PC-3 (cell line): ENCODE measurements at regions of chr7 and their contacts with region 1.

Region 1: GRCh38 chr7:45136106-45137060 is 21.2 kb upstream of the RAMP3 start:
- DNase-seq: peak; percentile 78
- ATAC-seq: peak; percentile 88
- H3K4me3 ChIP-seq: no peak overlapping the region
- H3K27ac ChIP-seq: no peak overlapping the region
- H3K4me1 ChIP-seq: no peaks in the 10 kb centered on the region; the same call in 1 of the 2 replicates
- H3K27me3 ChIP-seq: no peaks in the 10 kb centered on the region
- CTCF ChIP-seq: peak; percentile 90

Region 2: GRCh38 chr7:44858161-44858560 is 278.2 kb before region 1 on chr7:
- CTCF ChIA-PET with region 1: interaction called, 14 read pairs
- POLR2A ChIA-PET with region 1: interaction called, 7 read pairs
- intact Hi-C with region 1: loop called (anchors 1 kb)
- DNase-seq: no peak
- ATAC-seq: no peak
- H3K4me3 ChIP-seq: no peak overlapping the region
- H3K27ac ChIP-seq: no peak overlapping the region
- H3K4me1 ChIP-seq: no peaks in the 10 kb centered on the region
- H3K27me3 ChIP-seq: no peaks in the 10 kb centered on the region
- CTCF ChIP-seq: no peak

Region 3: GRCh38 chr7:44944821-44945220 is 191.6 kb before region 1 on chr7:
- CTCF ChIA-PET with region 1: interaction called, 11 read pairs
- POLR2A ChIA-PET with region 1: no interaction called
- intact Hi-C with region 1: no loop called
- DNase-seq: no peak
- ATAC-seq: no peak
- H3K4me3 ChIP-seq: no peak overlapping the region
- H3K27ac ChIP-seq: no peak overlapping the region
- H3K4me1 ChIP-seq: no peaks in the 10 kb centered on the region
- H3K27me3 ChIP-seq: no peaks in the 10 kb centered on the region
- CTCF ChIP-seq: no peak

Region 4: DNA sequence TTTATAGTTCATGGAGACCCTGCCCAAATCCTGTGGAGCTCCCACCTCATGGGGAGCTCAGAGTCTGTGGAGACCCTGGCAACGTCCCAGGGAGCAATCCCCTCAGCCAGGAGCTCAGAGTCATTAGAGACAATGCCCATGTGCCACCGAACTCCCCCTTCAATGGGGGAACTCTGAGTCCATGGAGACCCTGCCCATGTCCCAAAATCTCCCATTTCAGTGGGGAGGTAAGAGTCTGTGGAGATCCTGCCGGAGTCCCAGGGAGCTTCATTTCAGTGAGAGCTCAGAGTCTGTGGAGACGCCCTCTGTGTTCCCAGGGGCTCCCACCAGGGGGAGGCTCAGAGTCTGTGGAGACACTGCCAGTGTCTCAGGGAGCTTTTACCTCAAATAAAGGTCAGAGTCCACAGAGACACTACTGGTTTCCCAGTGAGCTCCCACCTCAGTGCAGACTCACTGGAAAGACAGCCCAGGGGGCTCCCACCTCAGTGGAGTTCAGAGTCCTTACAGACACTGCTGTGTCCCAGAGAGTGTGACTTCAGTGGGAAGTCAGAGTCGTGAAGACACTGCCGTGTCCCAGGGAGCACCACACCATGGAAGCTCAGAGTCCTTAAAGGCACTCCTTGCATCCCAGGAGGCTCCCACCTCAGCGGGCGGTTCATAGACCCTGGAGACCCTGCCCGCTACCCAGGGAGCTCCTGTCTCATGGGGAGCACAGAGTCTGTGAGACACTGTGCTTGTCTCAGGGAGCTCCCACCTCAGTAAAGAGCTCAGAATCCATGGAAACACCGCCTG is 162.6 kb before region 1 on chr7:
- CTCF ChIA-PET with region 1: interaction called, 8 read pairs
- POLR2A ChIA-PET with region 1: no interaction called
- intact Hi-C with region 1: loop called (anchors 1 kb)
- DNase-seq: no peak
- ATAC-seq: no peak
- H3K4me3 ChIP-seq: no peak overlapping the region
- H3K27ac ChIP-seq: no peak overlapping the region
- H3K4me1 ChIP-seq: no peaks in the 10 kb centered on the region
- H3K27me3 ChIP-seq: no peaks in the 10 kb centered on the region
- CTCF ChIP-seq: peak; percentile 49